Endothelial cell of umbilical vein (primary cell): ENCODE measurements at regions of chr2 and their contacts with region 1.

Region 1: DNA sequence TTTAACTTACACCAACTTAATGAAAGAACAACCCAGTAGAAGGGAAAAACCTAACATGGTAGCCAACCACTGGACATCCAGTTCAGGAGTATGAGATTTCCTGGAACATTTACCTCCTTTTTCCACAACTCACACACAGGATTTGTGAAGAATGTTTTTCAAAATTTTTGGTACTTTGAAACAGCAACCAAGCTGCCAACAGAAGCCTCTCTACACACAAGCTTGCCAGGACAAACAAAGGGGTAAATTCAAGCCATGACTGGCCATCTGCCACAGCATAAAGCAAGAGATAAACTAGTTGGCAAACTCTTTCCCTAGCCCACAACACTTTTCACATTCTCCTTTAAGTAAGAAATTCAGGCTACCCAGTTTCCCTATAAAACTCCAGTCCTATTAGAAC is 21.4 kb downstream of the MGAT4A start:
- DNase-seq: peak; percentile 82
- H3K4me3 ChIP-seq: no peak overlapping the region
- H3K27ac ChIP-seq: no peak overlapping the region
- H3K4me1 ChIP-seq: peaks cover 42% of the 10 kb centered on the region
- H3K27me3 ChIP-seq: no peaks in the 10 kb centered on the region
- CTCF ChIP-seq: no peak
- POLR2A ChIP-seq: no peak

Region 2: GRCh38 chr2:98726205-98726604 is 16.7 kb after region 1 on chr2:
- CTCF ChIA-PET with region 1: interaction called, 5 read pairs
- POLR2A ChIA-PET with region 1: no interaction called
- dilution Hi-C with region 1: no loop called
- intact Hi-C with region 1: loop called (anchors 1 kb)
- DNase-seq: peak; percentile 77
- H3K4me3 ChIP-seq: peak overlapping the region; percentile 1 to 31 (median 4)
- H3K27ac ChIP-seq: peak overlapping the region; percentile 68
- H3K4me1 ChIP-seq: peaks cover 44% of the 10 kb centered on the region
- H3K27me3 ChIP-seq: no peaks in the 10 kb centered on the region
- CTCF ChIP-seq: no peak
- POLR2A ChIP-seq: no peak

Region 3: DNA sequence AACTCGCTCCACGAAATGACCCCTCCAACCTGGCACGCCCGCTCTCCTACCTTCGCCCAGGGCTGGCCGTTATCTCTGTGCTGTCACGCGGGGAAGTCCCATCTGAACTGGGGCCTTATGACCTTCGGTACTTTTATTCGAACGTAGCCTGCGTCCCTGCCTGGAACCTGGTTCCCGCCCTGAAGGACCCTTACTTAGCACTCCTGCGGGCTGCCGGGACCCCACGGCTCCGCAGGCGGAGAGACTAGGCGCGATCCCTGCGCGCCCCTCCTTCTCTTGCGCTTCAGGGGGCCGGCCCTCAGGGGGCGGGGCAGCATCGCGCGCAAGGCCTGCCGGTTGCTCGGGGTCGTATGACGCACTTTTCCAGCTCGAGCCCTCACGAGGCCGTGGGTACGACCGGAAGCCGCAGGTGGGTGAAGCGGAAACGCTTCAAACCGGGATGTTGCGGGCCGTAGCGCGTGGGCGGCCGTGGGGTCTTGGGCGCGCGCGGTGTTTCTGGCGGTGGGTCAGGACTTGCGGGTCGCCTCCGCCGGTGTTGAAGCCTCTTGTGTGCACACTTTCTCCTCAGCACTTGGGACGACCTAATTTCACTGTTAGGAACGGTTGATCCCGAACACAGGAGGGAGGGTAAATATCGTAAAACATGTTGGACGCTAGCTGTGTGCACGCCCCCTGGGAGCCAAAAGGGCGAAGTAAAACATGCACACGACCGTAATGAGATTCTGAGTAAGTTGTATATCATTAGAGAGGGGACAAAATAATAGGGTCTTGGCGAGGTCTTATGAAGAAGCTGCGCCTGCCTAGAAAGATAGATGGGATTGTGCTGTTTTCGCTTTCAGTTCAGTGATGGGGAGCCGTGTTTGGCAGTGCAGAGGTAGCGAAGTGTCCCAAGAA is 445.4 kb after region 1 on chr2 and contains the starts of genes LIPT1 and TSGA10:
- CTCF ChIA-PET with region 1: no interaction called
- POLR2A ChIA-PET with region 1: no interaction called
- dilution Hi-C with region 1: no loop called
- intact Hi-C with region 1: no loop called
- DNase-seq: peak; percentile 90
- H3K4me3 ChIP-seq: peak within 1 kb of the TSS; percentile 92 to 99 (median 98)
- H3K27ac ChIP-seq: peak within 1 kb of the TSS; percentile 83
- H3K4me1 ChIP-seq: peaks cover 10% of the 10 kb centered on the region
- H3K27me3 ChIP-seq: no peaks in the 10 kb centered on the region
- CTCF ChIP-seq: peak in 1 of 2 donors; percentile 2
- POLR2A ChIP-seq: peak; percentile 72
- total RNA-seq, gene LIPT1: 4.8 and 5.3 TPM in 2 replicates
- total RNA-seq, gene TSGA10: 0.51 and 2.7 TPM in 2 replicates